A673 (cell line): ENCODE measurements at regions of chr20 and their contacts with region 1.

Region 1: DNA sequence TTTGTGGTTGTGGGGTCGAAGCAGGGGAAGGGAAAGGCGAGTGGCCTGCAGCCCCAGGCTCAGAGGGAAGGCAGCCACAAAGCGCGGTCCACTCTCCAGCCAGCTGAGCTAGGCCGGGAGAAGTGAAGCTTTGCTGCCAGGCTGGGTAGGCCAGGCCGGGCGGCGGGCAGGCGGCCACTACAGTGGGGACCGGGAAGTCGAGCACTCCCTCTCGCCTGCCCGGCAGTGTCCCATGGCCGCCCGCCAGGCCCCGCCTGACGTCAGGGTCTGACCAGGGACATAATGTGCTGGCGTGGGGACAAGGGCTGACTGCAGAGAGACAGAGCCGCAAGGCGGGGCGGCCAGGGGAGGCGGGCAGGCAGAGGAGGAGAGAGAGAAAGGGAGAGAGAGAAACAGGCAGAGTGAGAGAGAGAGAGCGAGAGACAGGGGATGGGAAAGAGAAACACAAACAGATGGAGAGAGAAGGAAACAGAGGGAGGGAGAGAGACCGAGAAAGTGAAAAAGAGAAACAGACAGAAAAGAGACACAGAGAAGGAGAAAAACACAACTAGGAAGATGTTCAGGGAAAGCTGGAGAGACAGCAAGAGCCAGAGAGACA is 94.6 kb upstream of the PTPN1 start:
- DNase-seq: no peak
- H3K4me3 ChIP-seq: no peak overlapping the region
- H3K27ac ChIP-seq: no peak overlapping the region
- H3K4me1 ChIP-seq: peaks cover 4% of the 10 kb centered on the region
- H3K27me3 ChIP-seq: no peaks in the 10 kb centered on the region
- CTCF ChIP-seq: no peak

Region 2: GRCh38 chr20:50327288-50328077 is 88.1 kb before region 1 on chr20:
- CTCF ChIA-PET with region 1: interaction called, 14 read pairs
- POLR2A ChIA-PET with region 1: no interaction called
- intact Hi-C with region 1: no loop called
- DNase-seq: no peak
- H3K4me3 ChIP-seq: no peak overlapping the region
- H3K27ac ChIP-seq: no peak overlapping the region
- H3K4me1 ChIP-seq: no peaks in the 10 kb centered on the region
- H3K27me3 ChIP-seq: no peaks in the 10 kb centered on the region
- CTCF ChIP-seq: no peak

Region 3: GRCh38 chr20:50478162-50479036 is 62.8 kb after region 1 on chr20:
- CTCF ChIA-PET with region 1: no interaction called
- POLR2A ChIA-PET with region 1: no interaction called
- intact Hi-C with region 1: no loop called
- DNase-seq: peak; percentile 91
- H3K4me3 ChIP-seq: no peak overlapping the region
- H3K27ac ChIP-seq: no peak overlapping the region
- H3K4me1 ChIP-seq: no peaks in the 10 kb centered on the region
- H3K27me3 ChIP-seq: no peaks in the 10 kb centered on the region
- CTCF ChIP-seq: peak; percentile 85